Mammary epithelial cell (primary cell): ENCODE measurements at regions of chr15 and their contacts with region 1.

Region 1: DNA sequence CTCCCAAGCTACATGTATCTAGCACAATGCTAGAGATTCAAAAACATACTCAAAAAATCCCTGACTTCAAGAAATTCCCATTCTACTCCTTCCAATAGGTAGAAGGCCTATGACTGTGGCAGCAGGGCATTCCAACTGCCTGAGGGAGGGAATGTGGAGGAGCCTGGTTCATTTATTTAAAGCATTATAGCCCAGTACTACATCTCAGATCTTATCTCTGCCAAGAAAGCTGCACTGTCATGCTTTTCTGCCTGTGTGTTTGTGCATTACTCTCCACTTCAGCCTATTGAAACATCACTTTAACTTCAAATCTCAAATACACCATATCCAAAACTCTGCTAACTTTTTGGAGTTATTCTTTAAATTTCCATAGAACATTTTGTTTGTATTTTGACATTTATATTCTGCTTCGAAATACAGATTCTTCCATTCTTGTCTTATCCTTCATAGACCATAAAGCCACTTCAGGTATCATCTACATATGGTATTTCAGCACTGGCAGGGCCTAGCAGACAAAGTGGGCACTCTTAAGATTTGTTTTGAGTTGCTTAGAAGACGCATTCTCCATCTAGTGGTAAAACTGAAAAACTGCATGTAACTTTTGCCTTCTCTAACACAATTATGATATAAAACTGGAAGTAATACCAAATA is 59.1 kb upstream of the NEDD4 start:
- DNase-seq: peak; percentile 48
- H3K4me3 ChIP-seq: no peak overlapping the region
- H3K27ac ChIP-seq: peak overlapping the region; percentile 4
- H3K4me1 ChIP-seq: peaks cover 8% of the 10 kb centered on the region
- H3K27me3 ChIP-seq: no peaks in the 10 kb centered on the region
- CTCF ChIP-seq: peak; percentile 71 to 81

Region 2: GRCh38 chr15:55661428-55661827 is 391.1 kb before region 1 on chr15:
- CTCF ChIA-PET with region 1: no interaction called
- dilution Hi-C with region 1: no loop called
- in situ Hi-C with region 1: loop called in 1 of 2 experiments (anchors 25 kb)
- intact Hi-C with region 1: no loop called
- DNase-seq: no peak
- H3K4me3 ChIP-seq: no peak overlapping the region
- H3K27ac ChIP-seq: no peak overlapping the region
- H3K4me1 ChIP-seq: no peaks in the 10 kb centered on the region
- H3K27me3 ChIP-seq: no peaks in the 10 kb centered on the region
- CTCF ChIP-seq: no peak

Region 3: GRCh38 chr15:55897560-55898336 is 154.8 kb before region 1 on chr15:
- CTCF ChIA-PET with region 1: no interaction called
- dilution Hi-C with region 1: no loop called
- in situ Hi-C with region 1: no loop called
- intact Hi-C with region 1: loop called (anchors 1 kb)
- DNase-seq: peak; percentile 79
- H3K4me3 ChIP-seq: no peak overlapping the region
- H3K27ac ChIP-seq: peak overlapping the region; percentile 77
- H3K4me1 ChIP-seq: peaks cover 14% of the 10 kb centered on the region
- H3K27me3 ChIP-seq: no peaks in the 10 kb centered on the region
- CTCF ChIP-seq: peak; percentile 91 to 99

Region 4: DNA sequence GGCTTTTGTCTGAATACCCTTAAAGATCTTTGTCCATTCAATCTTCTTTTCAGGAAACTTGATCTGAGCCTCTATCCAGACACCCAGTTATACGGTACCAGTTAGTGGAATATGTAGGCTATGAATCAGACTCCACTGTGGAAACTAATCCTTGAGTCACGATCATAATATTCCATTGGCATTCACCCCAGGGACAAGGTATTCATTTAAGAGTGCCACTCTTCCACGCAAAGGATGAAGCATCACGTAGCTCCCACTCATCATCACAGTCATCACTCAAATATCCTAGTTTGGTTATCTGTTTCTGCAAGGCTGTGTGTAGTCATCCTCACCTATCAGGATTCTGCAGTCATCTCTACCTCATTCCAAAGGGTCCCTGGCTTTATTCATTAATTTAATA is 144.7 kb before region 1 on chr15:
- CTCF ChIA-PET with region 1: no interaction called
- dilution Hi-C with region 1: no loop called
- in situ Hi-C with region 1: no loop called
- intact Hi-C with region 1: loop called (anchors 2 kb)
- DNase-seq: peak; percentile 95
- H3K4me3 ChIP-seq: no peak overlapping the region
- H3K27ac ChIP-seq: peak overlapping the region; percentile 93
- H3K4me1 ChIP-seq: peaks cover 46% of the 10 kb centered on the region
- H3K27me3 ChIP-seq: no peaks in the 10 kb centered on the region
- CTCF ChIP-seq: no peak

Region 5: DNA sequence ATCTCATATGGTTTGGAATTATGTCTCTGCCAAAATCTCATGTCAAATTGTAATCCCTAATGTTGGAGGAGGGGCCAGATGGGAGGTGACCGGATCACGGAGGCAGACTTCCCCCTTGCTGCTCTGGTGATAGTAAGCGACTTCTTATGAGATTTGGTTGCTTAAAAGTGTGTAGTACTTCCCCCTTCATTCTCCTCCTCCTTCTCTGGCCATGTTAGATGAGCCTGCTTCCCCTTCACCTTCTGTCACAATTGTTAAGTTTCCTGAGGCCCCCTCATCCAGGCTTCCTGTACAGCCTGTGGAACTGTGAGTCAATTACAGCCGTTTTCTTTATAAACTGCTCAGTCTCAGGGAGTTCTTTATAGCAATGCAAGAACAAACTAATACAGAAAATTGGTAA is 110.2 kb before region 1 on chr15:
- CTCF ChIA-PET with region 1: no interaction called
- dilution Hi-C with region 1: no loop called
- in situ Hi-C with region 1: no loop called
- intact Hi-C with region 1: loop called (anchors 5 kb)
- DNase-seq: no peak
- H3K4me3 ChIP-seq: no peak overlapping the region
- H3K27ac ChIP-seq: no peak overlapping the region
- H3K4me1 ChIP-seq: no peaks in the 10 kb centered on the region
- H3K27me3 ChIP-seq: no peaks in the 10 kb centered on the region
- CTCF ChIP-seq: no peak

Region 6: DNA sequence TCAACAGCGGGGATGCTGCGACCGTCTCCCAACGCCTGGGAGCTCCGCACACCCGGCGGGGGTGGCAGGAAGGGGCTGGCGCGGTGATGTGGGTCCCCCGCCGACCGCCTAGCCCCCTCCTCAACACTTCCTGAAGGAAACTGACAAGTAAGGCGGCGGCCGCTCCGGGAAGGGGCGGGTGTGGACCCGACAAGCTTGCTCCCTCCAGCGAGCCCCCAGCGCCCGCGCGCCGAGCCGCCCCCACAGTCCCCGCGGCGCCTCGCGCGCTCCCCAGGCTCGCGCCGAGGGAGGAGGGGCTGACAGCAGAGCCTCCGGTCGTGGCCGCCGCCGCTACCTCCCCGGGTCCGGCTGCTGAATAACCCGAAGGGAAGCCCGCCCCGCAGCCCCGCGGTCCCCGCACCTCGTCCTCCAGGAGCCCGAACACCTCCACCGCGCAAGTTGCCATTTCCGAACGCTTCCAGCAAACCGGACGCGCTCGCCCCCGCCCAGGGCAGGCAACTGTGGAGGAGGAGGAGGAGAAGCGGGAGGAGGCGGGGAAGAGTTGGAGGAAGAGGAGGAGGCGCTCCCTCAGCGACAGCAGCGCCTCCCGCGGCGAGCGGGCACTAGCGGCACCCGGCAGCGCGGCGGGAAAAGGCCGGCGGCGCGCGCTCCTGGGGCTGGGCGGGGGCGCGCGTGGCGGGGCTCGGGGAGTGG is 59.3 kb before region 1 on chr15 and contains the start of gene NEDD4:
- CTCF ChIA-PET with region 1: interaction called, 7 read pairs
- dilution Hi-C with region 1: loop called (anchors 5 kb)
- in situ Hi-C with region 1: loop called in 1 of 2 experiments (anchors 5 kb)
- intact Hi-C with region 1: loop called (anchors 1 kb)
- DNase-seq: peak; percentile 86
- H3K4me3 ChIP-seq: peak within 1 kb of the TSS; percentile 69 to 97 (median 89)
- H3K27ac ChIP-seq: peak within 1 kb of the TSS; percentile 92
- H3K4me1 ChIP-seq: peaks cover 27% of the 10 kb centered on the region
- H3K27me3 ChIP-seq: no peaks in the 10 kb centered on the region
- CTCF ChIP-seq: peak; percentile 41 to 66
- total RNA-seq, gene NEDD4: 27.5 to 31.6 TPM

Region 7: DNA sequence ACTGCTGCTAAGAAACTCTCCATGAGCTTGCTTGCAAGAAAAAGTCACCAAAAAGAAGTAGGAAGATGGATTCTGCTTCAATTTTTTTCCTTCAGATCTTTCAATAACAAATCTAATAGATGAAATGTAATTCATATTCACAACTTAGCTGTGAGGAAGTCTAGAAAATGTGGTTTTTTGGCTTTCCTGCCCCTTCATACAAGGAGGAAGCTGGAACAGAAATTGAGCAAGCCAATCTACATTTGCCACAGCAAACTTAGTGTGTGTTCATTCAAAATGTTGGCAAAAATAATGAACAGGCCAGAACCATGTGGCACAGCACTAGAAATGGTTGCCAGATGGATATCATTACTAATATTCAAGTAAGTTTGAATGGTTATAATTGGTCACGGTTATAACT is 34.0 kb after region 1 on chr15:
- CTCF ChIA-PET with region 1: no interaction called
- dilution Hi-C with region 1: no loop called
- in situ Hi-C with region 1: no loop called
- intact Hi-C with region 1: no loop called
- DNase-seq: no peak
- H3K4me3 ChIP-seq: no peak overlapping the region
- H3K27ac ChIP-seq: no peak overlapping the region
- H3K4me1 ChIP-seq: peaks cover 5% of the 10 kb centered on the region
- H3K27me3 ChIP-seq: no peaks in the 10 kb centered on the region
- CTCF ChIP-seq: no peak